Panc1 (cell line): ENCODE measurements at regions of chr2 and their contacts with region 1.

Region 1: DNA sequence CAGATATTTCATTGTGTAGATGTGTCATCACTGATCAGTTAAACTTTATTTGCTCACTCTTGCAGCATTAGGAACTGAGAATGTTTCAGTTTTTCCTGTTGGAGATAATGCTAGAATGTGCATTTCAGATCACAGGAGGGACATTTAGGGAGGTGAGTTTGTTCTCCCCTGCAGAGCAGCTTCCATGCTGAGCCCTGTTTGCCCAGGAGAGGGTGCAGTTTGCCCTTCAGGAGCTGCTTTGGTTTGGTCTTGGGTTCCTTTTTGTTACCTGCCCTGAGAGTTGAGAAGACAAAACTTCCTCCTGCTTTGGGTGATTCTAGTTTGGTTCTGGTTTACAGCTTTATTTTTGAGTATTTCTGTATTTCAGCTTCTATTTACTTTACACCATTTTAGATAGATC is 49.9 kb downstream of the DGKD start:
- DNase-seq: no peak
- ATAC-seq: 0 out of 2 replicates have a peak, but pooled peaks have one; percentile 58
- H3K4me3 ChIP-seq: no peak overlapping the region
- H3K27ac ChIP-seq: no peak overlapping the region
- H3K4me1 ChIP-seq: no peaks in the 10 kb centered on the region; the same call in 1 of the 2 replicates
- H3K27me3 ChIP-seq: no peaks in the 10 kb centered on the region
- CTCF ChIP-seq: peak; percentile 80

Region 2: DNA sequence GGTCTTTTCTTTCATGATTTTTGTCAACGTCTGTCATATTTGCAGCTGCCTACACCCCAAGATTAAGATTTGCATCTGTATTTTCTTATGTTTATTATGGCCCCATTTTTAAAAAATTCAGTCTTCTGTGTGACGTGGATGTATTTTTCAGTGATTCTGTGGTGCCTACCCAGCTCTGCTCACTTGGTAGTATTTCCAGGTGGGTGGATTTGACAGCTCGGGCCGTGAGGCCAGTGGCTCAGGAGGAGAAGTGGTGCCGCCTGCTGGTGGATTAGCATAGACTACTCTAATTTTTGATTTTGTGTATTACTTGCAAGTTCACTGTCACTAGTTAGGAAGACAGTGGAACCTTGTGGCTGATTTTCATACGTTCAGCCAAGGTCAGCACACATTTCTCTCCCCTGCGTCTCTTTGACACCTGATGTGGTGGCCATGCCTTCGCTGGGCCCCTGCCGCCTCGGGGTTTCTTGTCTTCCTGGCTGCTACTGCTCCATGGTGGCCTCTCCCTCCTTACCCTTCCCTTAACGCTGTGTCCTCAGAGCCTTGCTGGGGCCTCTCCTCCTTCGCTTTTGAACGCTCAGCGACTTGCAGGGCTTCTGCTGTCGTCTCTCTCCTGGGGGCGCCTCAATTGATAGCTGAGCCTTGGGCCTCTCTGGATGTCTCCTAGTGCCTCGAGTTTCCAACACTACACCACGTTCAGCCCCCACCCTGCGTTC is 39.4 kb after region 1 on chr2:
- CTCF ChIA-PET with region 1: interaction called, 5 read pairs
- POLR2A ChIA-PET with region 1: no interaction called
- in situ Hi-C with region 1: no loop called
- intact Hi-C with region 1: loop called (anchors 2 kb)
- DNase-seq: no peak
- ATAC-seq: peak; percentile 81
- H3K4me3 ChIP-seq: no peak overlapping the region
- H3K27ac ChIP-seq: no peak overlapping the region
- H3K4me1 ChIP-seq: peaks cover 11% of the 10 kb centered on the region
- H3K27me3 ChIP-seq: no peaks in the 10 kb centered on the region
- CTCF ChIP-seq: peak; percentile 92